ENCODE measurements at regions of chr2 and their contacts with region 1.

Region 1: DNA sequence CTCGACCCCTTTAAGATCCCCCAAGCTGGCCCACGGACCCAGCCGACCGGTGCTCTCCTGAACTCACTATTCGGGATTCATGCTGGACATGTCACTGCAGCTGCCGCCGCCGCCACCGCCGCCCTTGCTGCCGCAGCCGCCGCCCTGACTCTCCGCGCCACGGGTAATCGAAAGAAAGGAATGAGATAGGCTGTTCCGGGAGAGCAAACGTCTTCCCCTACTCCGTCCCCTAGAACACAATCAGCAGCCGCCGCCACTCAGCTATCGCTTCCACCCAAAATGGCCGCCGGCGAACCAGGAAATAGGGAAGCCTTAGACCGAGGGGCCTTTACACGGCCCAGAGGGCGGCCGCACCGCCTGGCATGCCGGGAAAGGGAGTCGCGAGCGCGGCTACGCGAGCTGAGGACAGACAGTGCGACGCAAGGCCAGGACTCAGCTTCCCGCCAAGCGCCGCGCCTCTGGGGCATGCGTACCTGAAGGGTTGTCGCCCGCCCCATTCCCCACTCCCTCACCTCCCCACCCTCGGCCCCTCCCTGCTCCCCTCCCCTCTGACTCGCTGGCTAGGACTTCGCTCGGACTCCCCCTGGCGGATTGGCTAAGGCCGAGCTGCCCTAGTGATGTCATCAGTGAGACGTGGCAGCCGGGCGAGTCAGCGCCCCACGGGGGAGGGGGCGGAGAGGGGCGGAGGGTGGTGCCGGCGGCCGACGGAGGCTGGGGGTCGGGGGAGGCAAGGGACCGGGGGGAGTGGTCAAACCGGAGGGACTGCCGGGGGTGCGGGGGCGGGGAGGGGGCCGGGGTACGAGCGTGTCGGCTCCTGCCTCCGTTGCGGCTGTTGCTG is at the start of gene RAB1A:
- DNase-seq: peak; percentile 99
- H3K4me3 Mint-ChIP-seq: peak within 1 kb of the TSS; percentile 95
- H3K27ac Mint-ChIP-seq: peak within 1 kb of the TSS; percentile 98
- H3K4me1 Mint-ChIP-seq: peaks cover 24% of the 10 kb centered on the region
- H3K27me3 Mint-ChIP-seq: peaks cover 3% of the 10 kb centered on the region
- total RNA-seq, gene RAB1A: 79.9 and 81.1 TPM in 2 replicates

Region 2: DNA sequence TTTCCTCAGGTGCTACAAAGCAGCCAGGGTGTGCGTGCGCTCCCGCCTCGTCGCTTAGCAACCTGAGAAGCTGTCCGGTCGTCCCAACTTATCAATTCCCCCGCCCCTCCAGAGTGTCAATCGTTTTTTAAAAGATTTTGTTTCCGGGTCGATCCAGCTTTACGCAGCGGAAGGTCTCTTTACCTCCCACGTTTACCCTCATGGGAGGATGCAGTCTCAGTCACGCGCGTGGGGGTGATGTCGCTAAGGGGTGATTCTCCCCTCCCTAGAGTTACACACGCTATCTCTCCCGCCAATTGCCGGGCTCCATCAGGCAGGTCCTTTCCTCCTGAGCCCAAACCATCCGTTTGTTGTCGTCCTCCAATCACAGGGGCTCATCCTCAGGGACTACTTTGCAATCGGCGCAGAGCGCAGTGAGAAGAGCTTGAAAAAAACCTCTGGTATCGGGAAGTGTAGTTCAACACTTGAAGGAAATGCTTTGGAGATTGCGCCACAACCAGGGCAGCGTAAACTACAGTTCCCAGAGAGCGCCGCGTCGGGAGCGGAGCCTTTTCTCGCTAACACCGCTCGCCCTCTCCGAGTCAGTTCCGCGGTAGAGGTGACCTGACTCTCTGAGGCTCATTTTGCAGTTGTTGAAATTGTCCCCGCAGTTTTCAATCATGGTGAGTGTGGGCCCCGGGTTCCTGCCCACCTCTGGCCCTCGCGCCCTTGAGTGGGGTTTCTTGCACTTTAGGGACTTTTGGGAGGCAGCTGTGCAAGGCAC is 1541.5 kb before region 1 on chr2 and contains the starts of genes MDH1 and WDPCP:
- intact Hi-C with region 1: loop called (anchors 2 kb)
- DNase-seq: peak; percentile 97
- H3K4me3 Mint-ChIP-seq: peak within 1 kb of the TSS; percentile 98
- H3K27ac Mint-ChIP-seq: peak within 1 kb of the TSS; percentile 92
- H3K4me1 Mint-ChIP-seq: peaks cover 32% of the 10 kb centered on the region
- H3K27me3 Mint-ChIP-seq: no peaks in the 10 kb centered on the region
- total RNA-seq, gene MDH1: 195 and 208 TPM in 2 replicates
- total RNA-seq, gene WDPCP: 6.0 and 8.9 TPM in 2 replicates

Region 3: DNA sequence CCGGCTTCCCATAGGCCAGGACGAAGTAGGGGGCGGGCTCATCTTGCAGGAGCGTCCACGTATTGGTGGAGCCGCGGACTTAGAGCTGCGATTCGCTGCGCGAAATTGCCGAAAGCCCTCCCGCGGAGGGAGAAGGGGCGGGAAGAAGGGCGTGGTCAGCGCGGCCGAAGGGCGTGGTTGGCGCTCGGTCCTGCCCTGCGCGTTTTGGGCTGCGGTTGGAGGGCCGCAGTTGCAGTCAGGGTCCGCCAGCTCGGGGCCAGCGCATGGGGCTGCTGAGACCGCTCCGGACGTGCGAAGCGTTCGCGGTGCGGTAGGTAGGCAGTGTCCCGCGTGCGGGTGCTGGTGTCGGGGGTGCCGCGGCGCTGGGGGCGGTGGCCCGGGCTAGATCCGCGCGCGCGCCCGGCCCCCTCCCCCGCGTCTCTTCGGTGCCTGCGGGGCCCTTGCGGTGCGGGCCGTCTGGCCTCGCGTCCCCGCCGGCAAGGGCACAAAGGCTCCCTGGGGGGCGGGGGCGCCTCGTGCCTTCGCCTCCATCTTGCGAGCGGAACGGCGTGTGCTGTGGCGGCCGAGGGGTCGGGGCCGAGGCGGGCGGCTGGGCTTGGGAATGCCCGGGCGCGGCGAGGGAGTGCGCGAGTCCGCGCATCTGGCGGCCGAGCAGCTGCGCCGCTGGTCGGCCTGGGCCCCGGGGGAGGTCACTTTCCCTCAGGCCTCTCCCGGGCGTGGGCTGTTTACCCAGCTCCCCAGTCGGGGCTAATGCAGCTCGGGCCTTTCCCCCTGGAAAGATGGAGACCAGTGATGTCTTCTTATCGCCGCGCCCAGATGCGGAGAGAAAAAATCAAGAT is 73.6 kb before region 1 on chr2 and contains the start of gene CEP68:
- intact Hi-C with region 1: loop called (anchors 1 kb)
- DNase-seq: peak; percentile 99
- H3K4me3 Mint-ChIP-seq: peak within 1 kb of the TSS; percentile 97
- H3K27ac Mint-ChIP-seq: peak within 1 kb of the TSS; percentile 87
- H3K4me1 Mint-ChIP-seq: peaks cover 50% of the 10 kb centered on the region
- H3K27me3 Mint-ChIP-seq: peaks cover 2% of the 10 kb centered on the region
- total RNA-seq, gene CEP68: 4.4 and 4.9 TPM in 2 replicates

Region 4: DNA sequence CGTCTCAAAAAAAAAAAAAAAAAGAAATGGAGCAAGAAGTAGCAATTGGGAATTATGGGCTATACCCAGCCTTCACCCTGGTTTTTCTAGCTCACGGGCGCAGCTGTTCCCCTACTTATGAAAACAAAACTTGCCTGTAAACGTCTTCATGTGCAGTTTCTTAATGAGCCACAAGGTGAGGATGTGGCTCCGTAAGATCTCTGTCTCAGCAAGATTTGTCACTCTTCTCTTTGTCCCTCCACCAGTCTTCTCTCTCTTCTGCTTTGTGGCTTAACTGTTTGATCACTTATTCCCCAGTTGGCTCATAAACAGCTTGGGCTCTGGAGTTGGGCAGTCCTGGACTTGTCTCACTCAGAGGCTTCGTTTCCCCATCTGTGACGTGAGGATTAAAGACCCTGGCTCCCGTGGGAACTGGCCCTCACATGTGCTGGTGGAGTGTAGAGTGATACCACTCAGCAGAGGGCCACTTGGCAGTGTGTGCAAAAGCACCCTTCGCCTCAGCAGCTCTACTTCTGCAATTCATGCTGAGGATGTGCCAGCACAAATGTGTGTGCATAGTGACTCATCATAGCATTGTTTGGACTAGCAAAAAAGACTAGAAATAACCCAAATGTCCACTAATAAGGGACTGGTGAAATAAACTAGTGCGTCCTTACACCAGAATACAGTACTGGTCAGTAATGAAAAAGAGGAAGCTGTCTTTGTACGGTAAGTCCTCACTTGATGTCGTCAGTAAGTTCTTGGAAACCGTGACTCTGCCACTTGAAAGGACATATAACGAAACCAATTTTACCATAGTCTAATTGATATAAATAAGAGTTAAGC is 65.1 kb before region 1 on chr2:
- intact Hi-C with region 1: loop called (anchors 1 kb)
- DNase-seq: peak; percentile 87
- H3K4me3 Mint-ChIP-seq: no peak overlapping the region
- H3K27ac Mint-ChIP-seq: peak overlapping the region; percentile 16
- H3K4me1 Mint-ChIP-seq: peaks cover 22% of the 10 kb centered on the region
- H3K27me3 Mint-ChIP-seq: no peaks in the 10 kb centered on the region

Region 5: DNA sequence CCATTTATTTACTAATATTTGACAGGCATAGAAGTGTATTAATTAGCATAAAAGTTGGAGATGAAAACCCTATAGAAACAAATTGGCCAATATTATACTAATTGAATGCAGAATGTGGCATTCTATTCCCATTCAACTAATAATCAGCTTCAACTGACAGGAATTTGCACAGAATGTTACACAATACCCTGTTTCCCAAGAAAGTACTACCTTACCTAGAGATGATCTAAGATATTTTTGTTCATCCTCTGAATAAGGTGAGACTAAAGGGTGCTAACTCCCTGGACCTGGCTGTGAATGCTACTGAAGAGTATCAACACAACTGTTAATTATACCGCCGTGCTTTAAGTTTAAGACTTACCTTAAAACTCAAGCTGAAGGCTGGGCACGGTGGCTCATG is 44.9 kb before region 1 on chr2:
- intact Hi-C with region 1: loop called (anchors 5 kb)
- DNase-seq: no peak
- H3K4me3 Mint-ChIP-seq: no peak overlapping the region
- H3K27ac Mint-ChIP-seq: no peak overlapping the region
- H3K4me1 Mint-ChIP-seq: peaks cover 13% of the 10 kb centered on the region
- H3K27me3 Mint-ChIP-seq: no peaks in the 10 kb centered on the region

Region 6: GRCh38 chr2:65227425-65228262 is 97.6 kb after region 1 on chr2 and contains the start of gene ACTR2:
- intact Hi-C with region 1: loop called (anchors 1 kb)
- DNase-seq: peak; percentile 99
- H3K4me3 Mint-ChIP-seq: peak within 1 kb of the TSS; percentile 97
- H3K27ac Mint-ChIP-seq: peak within 1 kb of the TSS; percentile 98
- H3K4me1 Mint-ChIP-seq: peaks cover 28% of the 10 kb centered on the region
- H3K27me3 Mint-ChIP-seq: peaks cover 1% of the 10 kb centered on the region
- total RNA-seq, gene ACTR2: 298 TPM in 2 replicates